GM13976 (cell line): ENCODE measurements at regions of chr1 and their contacts with region 1.

Region 1: GRCh38 chr1:28779751-28780408 is 32.1 kb upstream of the OPRD1 start:
- DNase-seq: no peak
- CTCF ChIP-seq: no peak

Region 2: GRCh38 chr1:28480308-28480707 is 299.6 kb before region 1 on chr1:
- in situ Hi-C with region 1: no loop called
- DNase-seq: no peak
- CTCF ChIP-seq: no peak

Region 3: GRCh38 chr1:28602536-28603439 is 177.1 kb before region 1 on chr1:
- in situ Hi-C with region 1: no loop called
- DNase-seq: peak; percentile 60
- CTCF ChIP-seq: peak; percentile 58

Region 4: GRCh38 chr1:29033829-29034466 is 254.1 kb after region 1 on chr1:
- in situ Hi-C with region 1: loop called (anchors 10 kb)
- DNase-seq: peak; percentile 65
- CTCF ChIP-seq: peak; percentile 45

Region 5: DNA sequence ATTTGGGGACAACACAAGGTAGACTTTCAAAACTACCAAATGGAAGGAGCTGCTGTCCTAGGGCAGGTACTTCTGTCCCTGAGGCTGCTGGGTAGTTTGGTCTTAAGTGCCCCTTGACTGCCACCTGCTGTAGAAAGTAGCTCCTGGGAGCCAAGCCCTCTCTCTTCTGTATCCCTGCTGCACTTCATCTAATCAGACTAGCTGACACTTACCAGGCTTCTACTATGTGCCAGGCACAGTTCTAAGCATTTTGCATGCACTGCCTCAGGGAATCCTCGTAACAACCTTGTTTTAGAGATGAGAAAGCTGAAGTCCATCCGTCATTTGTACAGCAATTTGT is 417.7 kb after region 1 on chr1:
- in situ Hi-C with region 1: loop called (anchors 10 kb)
- DNase-seq: peak; percentile 49
- CTCF ChIP-seq: no peak